ENCODE measurements at regions of chrX and their contacts with region 1.

Region 1: GRCh38 chrX:65595460-65595876 is 60.9 kb upstream of the LAS1L start:
- DNase-seq: peak; percentile 83
- H3K4me3 Mint-ChIP-seq: peak overlapping the region; percentile 22
- H3K27ac Mint-ChIP-seq: peak overlapping the region; percentile 90
- H3K4me1 Mint-ChIP-seq: peaks cover 44% of the 10 kb centered on the region
- H3K27me3 Mint-ChIP-seq: no peaks in the 10 kb centered on the region

Region 2: GRCh38 chrX:65607070-65607742 is 11.7 kb after region 1 on chrX:
- intact Hi-C with region 1: loop called (anchors 1 kb)
- DNase-seq: no peak
- H3K4me3 Mint-ChIP-seq: no peak overlapping the region
- H3K27ac Mint-ChIP-seq: peak overlapping the region; percentile 88
- H3K4me1 Mint-ChIP-seq: peaks cover 40% of the 10 kb centered on the region
- H3K27me3 Mint-ChIP-seq: no peaks in the 10 kb centered on the region

Region 3: GRCh38 chrX:65674204-65674893 is 78.9 kb after region 1 on chrX:
- intact Hi-C with region 1: loop called (anchors 1 kb)
- DNase-seq: no peak
- H3K4me3 Mint-ChIP-seq: peak overlapping the region; percentile 82
- H3K27ac Mint-ChIP-seq: peak overlapping the region; percentile 97
- H3K4me1 Mint-ChIP-seq: peaks cover 71% of the 10 kb centered on the region
- H3K27me3 Mint-ChIP-seq: no peaks in the 10 kb centered on the region

Region 4: DNA sequence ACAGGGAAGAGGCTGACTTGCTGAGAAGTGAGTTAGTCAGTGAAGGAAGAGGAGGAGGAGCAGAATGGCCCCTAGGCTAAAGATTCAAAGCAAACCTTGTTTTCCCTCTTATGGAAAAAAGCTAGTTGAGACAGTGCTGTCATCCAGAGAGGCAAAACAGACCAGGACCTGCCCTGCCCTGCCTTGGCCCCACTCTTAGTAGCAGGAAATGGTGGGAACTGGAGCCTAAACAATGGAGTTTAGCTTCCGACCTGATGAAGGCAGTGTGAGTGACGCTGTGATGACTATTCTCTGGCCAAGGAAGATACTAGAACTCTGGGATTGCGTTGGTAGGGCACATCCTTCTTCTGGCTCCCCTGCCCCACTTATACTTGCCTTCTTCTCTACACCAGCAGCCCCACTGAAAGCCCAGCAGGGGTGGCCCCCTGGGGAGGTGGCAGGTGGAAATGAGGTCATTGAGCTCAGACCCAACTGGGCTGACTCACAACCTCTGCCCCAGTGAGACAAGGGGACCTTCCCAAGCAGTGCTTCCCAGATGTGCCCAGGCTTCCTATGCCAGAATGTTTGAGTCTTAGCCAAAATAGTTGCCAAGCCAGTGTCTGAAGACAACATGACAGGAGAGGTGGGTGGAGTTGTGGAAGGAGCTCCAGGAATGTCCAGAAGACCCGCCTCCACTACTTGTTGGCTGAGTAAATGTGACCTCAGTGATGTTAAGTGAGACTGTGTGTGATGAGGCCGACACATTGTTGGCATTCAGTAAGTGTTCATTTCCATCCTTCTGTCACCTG is 110.8 kb after region 1 on chrX:
- intact Hi-C with region 1: loop called (anchors 1 kb)
- DNase-seq: no peak
- H3K4me3 Mint-ChIP-seq: no peak overlapping the region
- H3K27ac Mint-ChIP-seq: peak overlapping the region; percentile 92
- H3K4me1 Mint-ChIP-seq: peaks cover 55% of the 10 kb centered on the region
- H3K27me3 Mint-ChIP-seq: no peaks in the 10 kb centered on the region

Region 5: DNA sequence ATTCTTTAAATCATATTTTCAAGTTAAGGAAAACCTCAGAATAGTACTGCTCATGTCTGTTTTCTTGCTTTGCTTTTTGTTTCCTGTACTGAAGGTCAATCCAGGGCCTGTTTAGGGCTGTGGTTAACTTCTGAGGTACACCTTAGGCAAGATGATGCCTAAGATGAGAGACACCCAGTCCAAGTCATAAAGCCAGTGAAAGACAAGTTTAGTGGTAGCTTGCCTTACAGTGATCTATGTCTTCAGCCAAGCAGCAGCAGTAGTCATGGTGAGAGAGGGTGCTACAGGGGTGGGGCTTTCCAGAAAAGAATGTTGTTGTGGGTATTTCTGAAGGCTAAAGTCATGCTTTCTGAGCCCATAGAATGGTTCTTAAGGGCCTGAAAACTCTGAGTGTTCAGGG is 270.7 kb after region 1 on chrX:
- intact Hi-C with region 1: loop called (anchors 5 kb)
- DNase-seq: peak; percentile 11
- H3K4me3 Mint-ChIP-seq: no peak overlapping the region
- H3K27ac Mint-ChIP-seq: peak overlapping the region; percentile 38
- H3K4me1 Mint-ChIP-seq: peaks cover 21% of the 10 kb centered on the region
- H3K27me3 Mint-ChIP-seq: no peaks in the 10 kb centered on the region

Region 6: GRCh38 chrX:66015152-66015831 is 419.8 kb after region 1 on chrX:
- intact Hi-C with region 1: loop called (anchors 10 kb)
- DNase-seq: peak; percentile 17
- H3K4me3 Mint-ChIP-seq: peak overlapping the region; percentile 62
- H3K27ac Mint-ChIP-seq: peak overlapping the region; percentile 73
- H3K4me1 Mint-ChIP-seq: peaks cover 77% of the 10 kb centered on the region
- H3K27me3 Mint-ChIP-seq: no peaks in the 10 kb centered on the region